IMR-90 (cell line): ENCODE measurements at regions of chr2 and their contacts with region 1.

Region 1: DNA sequence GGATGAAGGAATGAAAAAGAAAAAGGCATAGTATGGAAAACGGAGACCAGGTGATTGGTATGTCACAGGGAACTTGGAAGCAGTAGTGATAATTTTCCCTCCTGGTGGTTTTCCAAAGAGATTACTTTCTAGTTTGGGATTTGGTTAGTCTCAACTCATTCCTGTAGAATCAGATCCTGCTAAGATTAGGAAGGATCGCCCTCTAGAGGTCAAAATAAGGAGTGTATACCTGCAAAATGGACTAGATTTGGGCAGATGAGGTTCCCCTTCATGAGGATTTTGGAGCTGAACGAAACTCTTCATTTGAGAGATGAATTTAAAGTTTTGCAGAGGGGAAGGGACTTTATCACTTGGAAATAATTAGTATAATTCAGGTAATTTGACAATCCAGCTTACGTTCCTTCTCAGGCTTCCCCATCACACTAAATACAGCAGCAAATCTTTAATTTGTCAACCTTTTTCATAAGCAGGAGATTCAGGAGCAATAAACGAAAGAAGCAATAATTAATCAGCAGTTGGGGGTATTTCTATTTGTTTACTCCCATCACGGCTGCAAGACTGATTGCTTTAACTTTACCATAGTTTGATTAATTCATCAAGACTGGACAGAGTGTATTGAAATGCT is 65.2 kb downstream of the CCDC195 start:
- DNase-seq: peak; percentile 56
- ATAC-seq: peak; percentile 85
- H3K4me3 ChIP-seq: no peak overlapping the region
- H3K27ac ChIP-seq: no peak overlapping the region
- H3K4me1 ChIP-seq: no peaks in the 10 kb centered on the region
- H3K27me3 ChIP-seq: no peaks in the 10 kb centered on the region; the same call in 1 of the 2 replicates
- CTCF ChIP-seq: peak; percentile 77
- POLR2A ChIP-seq: no peak
- RAD21 ChIP-seq: peak; percentile 89

Region 2: DNA sequence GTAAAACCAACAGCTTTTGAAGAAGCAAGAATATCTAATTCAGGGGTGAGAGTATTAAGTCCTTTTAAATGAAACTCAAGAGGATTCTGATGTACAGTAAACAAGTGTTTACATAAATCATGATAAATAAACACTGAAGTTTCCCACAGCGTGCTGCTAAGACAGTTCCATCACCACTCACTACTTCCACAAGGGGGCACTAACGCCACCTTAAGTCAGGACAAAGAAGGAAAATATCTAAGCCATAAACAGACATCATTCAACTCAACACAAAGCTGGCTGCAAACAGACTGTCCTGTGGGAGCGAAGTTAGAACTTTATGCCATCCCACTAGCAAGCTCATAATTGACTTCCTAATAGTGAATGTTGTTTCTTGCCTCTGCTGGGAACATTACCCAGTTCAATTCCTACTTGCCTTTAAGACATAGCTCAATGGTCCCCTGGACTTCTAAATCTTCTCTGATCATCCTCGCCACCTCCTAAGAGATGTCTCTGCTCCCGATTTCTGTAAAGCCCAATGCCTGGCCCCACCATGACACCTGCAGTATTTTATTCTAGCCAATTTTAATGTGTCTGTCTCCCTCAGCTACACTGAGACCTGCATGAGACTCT is 657.2 kb before region 1 on chr2:
- CTCF ChIA-PET with region 1: no interaction called
- POLR2A ChIA-PET with region 1: no interaction called
- dilution Hi-C with region 1: no loop called
- in situ Hi-C with region 1: loop called (anchors 10 kb)
- intact Hi-C with region 1: no loop called
- DNase-seq: peak; percentile 82
- ATAC-seq: peak; percentile 77
- H3K4me3 ChIP-seq: no peak overlapping the region
- H3K27ac ChIP-seq: no peak overlapping the region
- H3K4me1 ChIP-seq: peaks cover 12% of the 10 kb centered on the region
- H3K27me3 ChIP-seq: no peaks in the 10 kb centered on the region
- CTCF ChIP-seq: peak; percentile 87
- POLR2A ChIP-seq: no peak
- RAD21 ChIP-seq: peak; percentile 90

Region 3: GRCh38 chr2:224357098-224357901 is 293.6 kb before region 1 on chr2:
- CTCF ChIA-PET with region 1: interaction called, 3 read pairs
- POLR2A ChIA-PET with region 1: no interaction called
- dilution Hi-C with region 1: no loop called
- in situ Hi-C with region 1: loop called (anchors 5 kb)
- intact Hi-C with region 1: loop called (anchors 1 kb)
- DNase-seq: peak; percentile 60
- ATAC-seq: peak; percentile 87
- H3K4me3 ChIP-seq: no peak overlapping the region
- H3K27ac ChIP-seq: no peak overlapping the region
- H3K4me1 ChIP-seq: no peaks in the 10 kb centered on the region; the same call in 1 of the 2 replicates
- H3K27me3 ChIP-seq: peaks cover 16% of the 10 kb centered on the region
- CTCF ChIP-seq: peak; percentile 85
- POLR2A ChIP-seq: no peak
- RAD21 ChIP-seq: peak; percentile 88

Region 4: GRCh38 chr2:224518806-224519580 is 131.9 kb before region 1 on chr2:
- CTCF ChIA-PET with region 1: no interaction called
- POLR2A ChIA-PET with region 1: no interaction called
- dilution Hi-C with region 1: no loop called
- in situ Hi-C with region 1: no loop called
- intact Hi-C with region 1: loop called (anchors 10 kb)
- DNase-seq: peak; percentile 84
- ATAC-seq: peak; percentile 79
- H3K4me3 ChIP-seq: no peak overlapping the region
- H3K27ac ChIP-seq: peak overlapping the region; percentile 52; the same call in 1 of the 2 replicates
- H3K4me1 ChIP-seq: peaks cover 15% of the 10 kb centered on the region
- H3K27me3 ChIP-seq: no peaks in the 10 kb centered on the region
- CTCF ChIP-seq: no peak
- POLR2A ChIP-seq: no peak
- RAD21 ChIP-seq: no peak

Region 5: GRCh38 chr2:224778474-224778877 is 127.5 kb after region 1 on chr2:
- CTCF ChIA-PET with region 1: no interaction called
- POLR2A ChIA-PET with region 1: no interaction called
- dilution Hi-C with region 1: no loop called
- in situ Hi-C with region 1: no loop called
- intact Hi-C with region 1: loop called (anchors 5 kb)
- DNase-seq: peak; percentile 60
- ATAC-seq: peak; percentile 70; the same call in 1 of the 2 replicates
- H3K4me3 ChIP-seq: no peak overlapping the region
- H3K27ac ChIP-seq: no peak overlapping the region
- H3K4me1 ChIP-seq: 0 out of 2 replicates have a peak, but pooled peaks cover 2% of the 10 kb centered on the region
- H3K27me3 ChIP-seq: no peaks in the 10 kb centered on the region
- CTCF ChIP-seq: peak; percentile 73
- POLR2A ChIP-seq: no peak
- RAD21 ChIP-seq: peak; percentile 62

Region 6: DNA sequence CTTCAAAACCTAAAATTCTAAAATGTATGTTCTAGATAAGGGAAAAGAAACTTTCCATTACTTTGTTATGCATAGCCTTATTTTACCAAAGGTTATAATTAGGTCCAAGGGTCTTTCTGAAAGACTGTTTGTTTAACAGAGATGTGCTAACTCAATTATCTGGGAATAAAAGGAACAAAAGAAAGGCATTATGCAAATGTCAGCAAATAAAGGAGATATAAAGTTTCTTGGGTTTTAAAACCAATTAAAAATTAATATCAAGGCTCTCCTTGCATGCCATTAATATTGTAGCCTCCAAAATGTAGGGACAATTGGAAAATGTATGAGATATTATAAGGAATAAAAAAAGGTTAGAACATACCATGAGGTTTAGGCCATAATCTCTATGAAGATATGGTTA is 479.2 kb after region 1 on chr2:
- CTCF ChIA-PET with region 1: no interaction called
- POLR2A ChIA-PET with region 1: no interaction called
- dilution Hi-C with region 1: no loop called
- in situ Hi-C with region 1: no loop called
- intact Hi-C with region 1: no loop called
- DNase-seq: no peak
- ATAC-seq: no peak
- H3K4me3 ChIP-seq: no peak overlapping the region
- H3K27ac ChIP-seq: no peak overlapping the region
- H3K4me1 ChIP-seq: no peaks in the 10 kb centered on the region
- H3K27me3 ChIP-seq: no peaks in the 10 kb centered on the region
- CTCF ChIP-seq: no peak
- POLR2A ChIP-seq: no peak
- RAD21 ChIP-seq: no peak